Heart right ventricle (tissue), 16 donors: ENCODE measurements at regions of chr1 and their contacts with region 1.

Region 1: GRCh38 chr1:234139966-234140365 is 233.3 kb upstream of the COA6 start:
- DNase-seq: no peak
- ATAC-seq: no peak
- H3K4me3 ChIP-seq: no peak overlapping the region
- H3K27ac ChIP-seq: no peak overlapping the region
- H3K4me1 ChIP-seq: no peaks in the 10 kb centered on the region
- H3K27me3 ChIP-seq: peaks cover 0 to 6% (median 0%) of the 10 kb centered on the region in 7 donors
- CTCF ChIP-seq: no peak

Region 2: GRCh38 chr1:234326497-234327366 is 186.8 kb after region 1 on chr1:
- intact Hi-C with region 1: loop called in 1 of 10 experiments (anchors 10 kb)
- DNase-seq: peak in 1 of 2 donors; percentile 29
- ATAC-seq: peak in 6 of 8 donors; percentile 55 to 80 (median 72)
- H3K4me3 ChIP-seq: peak overlapping the region in 8 of 10 donors; percentile 7 to 50 (median 40)
- H3K27ac ChIP-seq: peak overlapping the region in 1 of 10 donors; percentile 49
- H3K4me1 ChIP-seq: peaks cover 0 to 15% (median 0%) of the 10 kb centered on the region in 9 donors
- H3K27me3 ChIP-seq: peaks cover 0 to 63% (median 38%) of the 10 kb centered on the region in 7 donors
- CTCF ChIP-seq: peak; percentile 43 to 82 (median 74)